OCI-LY7 (cell line): ENCODE measurements at regions of chr7 and their contacts with region 1.

Region 1: DNA sequence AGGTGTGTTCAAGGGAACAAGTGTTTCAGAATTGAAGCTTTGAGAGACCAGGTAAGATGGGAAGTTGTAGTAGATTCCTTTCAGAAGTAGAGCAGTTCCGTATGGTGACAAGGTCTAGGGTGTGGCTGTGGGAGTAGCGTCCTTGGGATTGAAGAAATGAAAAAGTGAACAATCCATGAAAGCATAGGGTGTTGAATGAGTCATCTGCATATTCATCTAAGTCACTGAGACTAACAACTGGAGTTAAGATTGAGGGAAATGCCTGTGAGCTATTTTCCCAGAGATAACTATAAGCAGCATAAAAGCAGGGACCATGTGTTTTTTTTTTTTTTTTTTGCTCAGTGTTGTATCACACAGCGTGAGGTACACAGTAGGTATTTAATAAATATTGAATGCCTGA is 134.8 kb downstream of the PHTF2 start:
- DNase-seq: no peak
- H3K4me3 ChIP-seq: no peak overlapping the region
- H3K27ac ChIP-seq: no peak overlapping the region
- H3K4me1 ChIP-seq: peaks cover 42% of the 10 kb centered on the region
- CTCF ChIP-seq: no peak

Region 2: DNA sequence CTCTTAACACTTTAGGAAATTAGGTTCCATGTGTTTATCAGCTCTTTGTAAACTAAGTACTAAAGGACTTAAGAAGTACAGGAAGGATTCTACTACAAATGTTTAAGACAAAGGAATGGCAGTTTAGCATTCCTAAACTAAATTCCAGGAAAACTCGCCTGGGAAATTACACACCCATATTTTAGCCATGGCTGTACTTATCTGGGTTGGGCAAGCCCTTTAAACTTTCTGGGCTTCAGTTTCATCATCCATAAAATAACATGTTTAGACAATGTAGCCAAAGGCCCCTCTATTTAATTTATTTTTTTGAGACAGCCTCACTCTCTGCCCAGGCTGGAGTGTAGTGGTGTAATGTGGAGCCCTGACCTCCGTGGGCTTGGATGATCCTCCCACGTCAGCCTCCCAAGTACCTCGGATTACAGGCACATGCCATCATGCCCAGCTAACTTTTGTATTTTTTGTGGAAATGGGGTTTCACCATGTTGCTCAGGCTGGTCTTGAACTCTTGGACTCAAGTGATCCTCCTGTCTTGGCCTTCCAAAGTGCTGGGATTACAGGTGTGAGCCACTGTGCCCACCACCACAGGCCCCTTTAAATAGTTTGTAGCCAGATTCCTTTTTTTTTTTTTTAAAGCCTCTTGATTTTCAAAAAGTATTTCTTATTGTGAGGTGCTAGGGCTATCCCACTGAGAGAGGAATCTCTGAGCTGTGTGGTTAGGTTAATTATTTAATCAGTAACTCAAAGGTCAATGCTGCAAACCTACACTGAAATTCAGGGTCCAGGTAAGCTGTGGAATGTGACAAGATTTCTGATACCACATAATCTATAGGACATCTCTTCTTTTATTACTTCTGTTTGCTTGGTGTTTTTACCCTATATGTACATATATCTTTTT is 167.2 kb before region 1 on chr7:
- CTCF ChIA-PET with region 1: no interaction called
- POLR2A ChIA-PET with region 1: interaction called, 6 read pairs
- intact Hi-C with region 1: loop called (anchors 1 kb)
- DNase-seq: no peak
- H3K4me3 ChIP-seq: no peak overlapping the region
- H3K27ac ChIP-seq: no peak overlapping the region
- H3K4me1 ChIP-seq: peaks cover 32% of the 10 kb centered on the region
- CTCF ChIP-seq: no peak